ENCODE measurements at regions of chr3 and their contacts with region 1.

Region 1: GRCh38 chr3:174547801-174548435 is 311.2 kb upstream of the NAALADL2 start:
- DNase-seq: peak; percentile 10
- H3K4me3 ChIP-seq: no peak overlapping the region
- H3K27me3 ChIP-seq: no peaks in the 10 kb centered on the region
- CTCF ChIP-seq: no peak

Region 2: DNA sequence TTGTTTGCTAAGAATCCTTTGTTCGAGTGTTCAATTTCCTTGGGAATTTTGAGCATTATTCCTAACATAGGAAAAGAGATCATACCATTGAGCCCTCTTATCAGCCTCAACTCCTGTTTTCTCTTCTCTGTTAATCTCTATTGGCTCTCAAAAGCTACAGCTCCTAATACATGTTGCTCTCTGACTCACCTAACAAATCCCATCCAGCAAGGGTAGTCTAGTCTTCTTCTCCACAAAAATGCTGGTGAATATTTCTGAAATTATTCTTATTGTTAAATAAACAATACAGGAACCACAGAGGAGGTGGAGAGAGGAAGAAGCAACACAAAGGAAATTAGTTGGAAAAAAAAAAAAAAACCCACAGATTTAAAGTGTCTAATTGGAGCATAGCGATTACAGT is 14.6 kb before region 1 on chr3:
- CTCF ChIA-PET with region 1: interaction called, 5 read pairs
- POLR2A ChIA-PET with region 1: interaction called, 10 read pairs
- DNase-seq: peak; percentile 26
- H3K4me3 ChIP-seq: no peak overlapping the region
- H3K27me3 ChIP-seq: no peaks in the 10 kb centered on the region
- CTCF ChIP-seq: no peak

Region 3: GRCh38 chr3:174697310-174697709 is 149.4 kb after region 1 on chr3:
- CTCF ChIA-PET with region 1: no interaction called
- POLR2A ChIA-PET with region 1: no interaction called
- DNase-seq: no peak
- H3K4me3 ChIP-seq: no peak overlapping the region
- H3K27me3 ChIP-seq: no peaks in the 10 kb centered on the region
- CTCF ChIP-seq: no peak

Measured in BJ (cell line).